AG04450 (cell line): ENCODE measurements at regions of chr10 and their contacts with region 1.

Region 1: GRCh38 chr10:112327678-112328077 is 44.5 kb downstream of the TECTB start:
- DNase-seq: no peak
- H3K4me3 ChIP-seq: no peak overlapping the region
- H3K27ac ChIP-seq: no peak overlapping the region
- H3K27me3 ChIP-seq: no peaks in the 10 kb centered on the region
- CTCF ChIP-seq: no peak

Region 2: DNA sequence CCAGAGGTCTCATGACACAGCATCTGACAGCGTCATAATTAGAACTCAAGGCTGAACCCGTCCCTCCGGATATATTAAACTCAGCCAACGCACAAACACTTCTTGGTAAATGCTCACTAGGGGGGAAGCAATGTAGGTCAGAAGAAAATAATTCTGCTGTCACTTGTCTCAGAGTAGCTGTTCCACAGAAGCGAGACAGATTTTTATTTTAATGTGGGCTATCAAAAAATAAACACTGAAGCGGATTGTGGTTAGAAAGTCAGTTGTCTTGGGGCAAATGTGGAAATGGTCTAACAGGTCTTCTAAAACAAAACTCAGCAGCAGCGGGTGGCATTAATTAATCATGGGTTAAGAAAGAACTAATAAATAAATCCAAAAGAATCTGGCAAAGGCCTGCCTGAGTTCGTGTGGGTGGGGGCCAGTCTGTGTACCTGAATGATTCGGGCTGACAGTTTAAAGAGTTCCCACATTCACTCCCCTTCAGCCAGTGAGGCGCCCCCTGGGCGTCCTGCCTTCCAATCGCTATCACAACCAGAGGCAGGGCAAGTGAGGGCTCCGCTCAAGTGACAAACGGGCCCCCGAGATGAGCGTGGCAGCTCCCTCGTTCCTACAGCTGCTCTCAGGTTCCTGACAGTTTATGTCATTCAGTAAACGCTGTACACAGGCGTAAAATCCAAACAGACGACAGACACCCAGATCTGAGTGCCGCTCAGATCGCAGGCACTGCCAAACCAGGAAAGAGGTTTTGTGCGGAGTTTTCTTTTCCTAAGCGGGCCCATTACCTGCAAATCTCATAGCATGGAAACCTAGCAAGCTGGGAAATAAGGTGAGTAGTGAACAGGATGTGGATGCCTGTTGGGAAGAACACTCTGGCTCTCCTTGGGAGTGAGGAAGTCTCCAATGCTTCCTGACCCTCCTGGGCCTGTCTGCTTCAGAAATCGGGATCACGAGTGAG is 1283.2 kb after region 1 on chr10:
- CTCF ChIA-PET with region 1: interaction called, 11 read pairs
- POLR2A ChIA-PET with region 1: no interaction called
- DNase-seq: no peak
- H3K4me3 ChIP-seq: no peak overlapping the region
- H3K27ac ChIP-seq: no peak overlapping the region
- H3K27me3 ChIP-seq: peaks cover 11% of the 10 kb centered on the region
- CTCF ChIP-seq: no peak